ENCODE measurements at regions of chr12 and their contacts with region 1.

Region 1: DNA sequence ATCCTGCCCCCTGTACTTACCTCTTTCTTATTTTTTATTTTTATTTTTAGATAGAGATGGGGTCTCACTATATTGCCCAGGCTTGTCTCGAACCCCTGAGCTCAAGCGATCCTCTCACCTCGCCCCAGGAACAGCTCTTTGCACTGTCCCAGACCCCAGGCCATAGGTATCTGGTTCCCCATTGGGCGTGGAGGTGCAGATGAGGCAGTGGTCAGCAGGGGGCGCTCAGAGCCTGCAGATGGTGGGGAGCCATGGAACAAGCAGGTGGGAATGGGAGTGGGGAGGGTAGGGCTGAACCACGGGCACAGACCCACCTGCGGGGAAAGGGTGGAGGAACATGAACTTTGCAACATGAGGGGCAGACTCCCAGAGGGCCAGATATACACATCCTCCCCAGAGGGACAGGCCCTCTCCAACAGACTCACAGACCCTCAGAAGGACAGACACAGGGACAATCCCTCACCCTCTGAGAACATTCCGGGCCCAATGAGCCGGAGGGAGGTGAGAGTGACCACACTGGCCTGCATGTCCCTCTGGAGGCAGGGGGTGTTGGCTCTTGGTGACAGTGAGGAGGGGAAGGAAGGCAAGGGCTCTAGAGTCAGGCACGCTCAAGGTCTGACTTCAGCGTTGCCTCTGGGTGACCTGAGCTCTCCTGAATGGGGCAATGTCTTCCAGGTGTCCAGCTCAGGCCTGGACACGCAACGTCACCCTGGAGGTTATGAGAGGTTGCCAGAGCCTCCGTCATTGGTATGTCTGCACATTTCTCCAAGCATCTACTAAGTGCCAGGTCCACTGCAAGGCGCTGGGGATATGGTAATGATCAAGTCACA is 34.9 kb downstream of the KRT80 start:
- DNase-seq: peak; percentile 69 to 87 (median 78)
- H3K4me3 ChIP-seq: no peak overlapping the region
- H3K27ac ChIP-seq: no peak overlapping the region
- H3K4me1 ChIP-seq: peaks cover 0 to 5% of the 10 kb centered on the region in 2 donors
- H3K27me3 ChIP-seq: no peaks in the 10 kb centered on the region
- CTCF ChIP-seq: peak; percentile 90 to 98 (median 96)
- POLR2A ChIP-seq: no peak

Region 2: DNA sequence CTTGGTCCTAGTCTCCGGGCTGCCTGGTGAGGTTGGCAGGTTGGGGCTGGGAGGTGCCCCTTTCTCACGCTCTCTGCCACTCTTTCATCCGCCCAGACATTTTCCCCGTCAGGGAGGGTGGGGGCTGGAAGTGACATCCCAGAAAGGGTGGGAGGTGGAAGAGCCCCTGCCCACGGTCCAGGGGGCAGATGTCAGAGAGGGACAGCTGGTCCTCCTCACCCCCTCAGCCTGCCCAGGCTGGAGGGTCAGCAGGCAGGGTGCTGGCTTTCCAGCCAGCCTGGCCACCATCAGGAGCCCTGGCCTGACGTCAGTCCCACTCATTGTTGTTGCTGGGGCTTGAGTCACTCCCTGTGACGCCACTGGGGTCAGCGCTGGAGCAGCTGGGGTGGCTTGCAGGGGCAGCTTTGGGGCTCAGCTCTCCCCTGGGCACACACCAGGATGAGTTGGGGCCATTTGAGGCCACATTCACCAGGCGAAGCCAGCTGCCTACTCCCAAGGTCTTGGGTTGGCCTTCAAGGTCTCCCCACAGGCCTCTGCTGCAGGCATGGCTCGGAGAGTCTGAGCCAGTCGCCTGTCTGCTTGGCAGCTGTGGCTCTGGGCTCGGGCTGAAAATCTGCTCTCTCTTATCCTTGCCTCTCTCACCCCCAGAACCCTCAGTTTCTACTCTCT is 92.8 kb before region 1 on chr12:
- intact Hi-C with region 1: no loop called
- DNase-seq: peak; percentile 86 to 94 (median 91)
- H3K4me3 ChIP-seq: no peak overlapping the region
- H3K27ac ChIP-seq: peak overlapping the region; percentile 75 to 98 (median 87)
- H3K4me1 ChIP-seq: peaks cover 38 to 43% of the 10 kb centered on the region in 2 donors
- H3K27me3 ChIP-seq: no peaks in the 10 kb centered on the region
- CTCF ChIP-seq: no peak
- POLR2A ChIP-seq: peak in 1 of 2 donors; percentile 56

Region 3: GRCh38 chr12:52278541-52279421 is 121.8 kb after region 1 on chr12:
- intact Hi-C with region 1: loop called in 1 of 2 experiments (anchors 2 kb)
- DNase-seq: peak; percentile 52 to 84 (median 80)
- H3K4me3 ChIP-seq: peak overlapping the region in 1 of 4 donors; percentile 25
- H3K27ac ChIP-seq: no peak overlapping the region
- H3K4me1 ChIP-seq: peaks cover 4 to 7% of the 10 kb centered on the region in 2 donors
- H3K27me3 ChIP-seq: no peaks in the 10 kb centered on the region
- CTCF ChIP-seq: peak; percentile 72 to 99 (median 94)
- POLR2A ChIP-seq: no peak

Region 4: DNA sequence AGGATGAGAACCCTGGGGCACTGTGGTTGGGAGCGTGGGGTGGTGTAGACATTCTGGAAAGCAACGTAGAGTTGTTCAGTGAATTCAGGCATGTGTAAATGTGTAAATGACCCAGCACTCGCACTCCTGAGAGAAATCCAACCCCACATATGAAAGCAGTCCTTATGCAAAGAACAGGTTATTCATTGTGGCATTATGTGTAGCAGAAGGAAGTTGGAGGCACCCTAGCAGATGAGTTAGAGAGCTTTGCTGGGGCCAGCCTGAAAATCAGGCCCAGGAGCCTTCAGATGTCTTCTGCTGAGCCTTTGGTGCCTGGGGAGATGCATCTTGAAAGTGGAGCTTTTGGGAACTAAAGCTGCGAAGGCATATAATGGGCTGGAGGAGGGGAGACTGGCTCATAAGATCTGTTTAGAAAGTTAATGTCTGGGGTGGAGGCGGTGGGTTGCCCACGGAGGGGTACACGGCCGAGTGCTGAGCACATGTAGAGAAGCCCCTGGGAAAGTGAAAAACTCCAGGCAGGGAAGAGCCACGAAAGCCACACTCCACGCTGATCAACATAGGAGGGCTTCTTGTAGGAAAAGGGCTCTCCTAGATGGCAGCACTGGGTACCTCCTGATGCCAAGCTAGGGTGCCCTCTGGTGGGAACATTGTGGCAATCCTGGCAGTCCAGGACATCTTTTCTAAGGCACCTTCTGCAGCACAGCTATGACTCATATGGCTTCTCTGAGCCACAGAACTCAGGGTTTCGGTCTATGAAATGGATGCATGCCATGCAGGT is 170.3 kb after region 1 on chr12:
- intact Hi-C with region 1: loop called (anchors 2 to 5 kb)
- DNase-seq: peak; percentile 77 to 93 (median 87)
- H3K4me3 ChIP-seq: no peak overlapping the region
- H3K27ac ChIP-seq: no peak overlapping the region
- H3K4me1 ChIP-seq: no peaks in the 10 kb centered on the region
- H3K27me3 ChIP-seq: peaks cover 4% of the 10 kb centered on the region
- CTCF ChIP-seq: peak; percentile 53 to 83 (median 77)
- POLR2A ChIP-seq: no peak

Region 5: GRCh38 chr12:52506858-52507715 is 350.1 kb after region 1 on chr12:
- intact Hi-C with region 1: loop called in 1 of 2 experiments (anchors 10 kb)
- DNase-seq: no peak
- H3K4me3 ChIP-seq: no peak overlapping the region
- H3K27ac ChIP-seq: no peak overlapping the region
- H3K4me1 ChIP-seq: no peaks in the 10 kb centered on the region
- H3K27me3 ChIP-seq: peaks cover 17% of the 10 kb centered on the region
- CTCF ChIP-seq: peak; percentile 25 to 57 (median 47)
- POLR2A ChIP-seq: no peak

Region 6: GRCh38 chr12:52870351-52871290 is 713.7 kb after region 1 on chr12:
- intact Hi-C with region 1: loop called in 1 of 2 experiments (anchors 5 kb)
- DNase-seq: peak in 6 of 7 donors; percentile 28 to 61 (median 44)
- H3K4me3 ChIP-seq: no peak overlapping the region
- H3K27ac ChIP-seq: no peak overlapping the region
- H3K4me1 ChIP-seq: peaks cover 0 to 10% of the 10 kb centered on the region in 2 donors
- H3K27me3 ChIP-seq: no peaks in the 10 kb centered on the region
- CTCF ChIP-seq: peak; percentile 31 to 59 (median 49)
- POLR2A ChIP-seq: no peak

Measured in adrenal gland (tissue), 19 donors.